ENCODE measurements at regions of chr2 and their contacts with region 1.

Region 1: DNA sequence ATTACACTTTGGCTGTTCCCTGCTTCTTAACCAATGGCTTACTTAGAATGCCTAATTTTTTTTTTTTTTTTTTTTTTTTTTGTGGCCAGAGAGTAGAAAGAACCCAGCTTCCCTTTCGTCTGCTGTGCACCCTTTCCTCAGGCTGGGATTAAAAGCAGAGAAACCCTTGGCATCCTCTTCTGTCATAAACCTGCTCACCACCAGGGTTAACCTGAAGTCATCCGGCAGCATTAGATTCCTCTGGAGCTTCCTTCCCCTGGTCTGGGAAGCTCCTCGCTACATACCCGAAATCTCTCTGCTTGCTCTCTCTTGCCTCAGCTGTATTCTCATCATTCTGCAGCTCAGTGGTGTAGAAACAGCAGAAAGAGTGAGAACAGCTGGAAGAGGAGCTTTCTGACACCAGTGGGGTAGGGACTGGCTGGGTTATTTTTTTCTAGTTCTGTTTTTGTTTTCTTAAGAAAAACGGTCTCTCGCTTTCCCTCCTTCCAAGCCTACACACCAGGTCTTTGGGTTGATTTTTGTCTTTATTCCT is 339.0 kb upstream of the MEIS1 start:
- DNase-seq: peak in 1 of 2 experiments; percentile 17
- H3K4me3 ChIP-seq: no peak overlapping the region
- H3K27ac ChIP-seq: no peak overlapping the region
- H3K4me1 ChIP-seq: no peaks in the 10 kb centered on the region; a peak in 1 of 7 replicates
- H3K27me3 ChIP-seq: no peaks in the 10 kb centered on the region; a peak in 1 of 7 replicates
- CTCF ChIP-seq: peak; percentile 30 to 69 (median 32); a peak in 3 of 4 replicates
- EP300 ChIP-seq: no peak
- POLR2A ChIP-seq: no peak
- RAD21 ChIP-seq: peak; percentile 25 to 50

Region 2: DNA sequence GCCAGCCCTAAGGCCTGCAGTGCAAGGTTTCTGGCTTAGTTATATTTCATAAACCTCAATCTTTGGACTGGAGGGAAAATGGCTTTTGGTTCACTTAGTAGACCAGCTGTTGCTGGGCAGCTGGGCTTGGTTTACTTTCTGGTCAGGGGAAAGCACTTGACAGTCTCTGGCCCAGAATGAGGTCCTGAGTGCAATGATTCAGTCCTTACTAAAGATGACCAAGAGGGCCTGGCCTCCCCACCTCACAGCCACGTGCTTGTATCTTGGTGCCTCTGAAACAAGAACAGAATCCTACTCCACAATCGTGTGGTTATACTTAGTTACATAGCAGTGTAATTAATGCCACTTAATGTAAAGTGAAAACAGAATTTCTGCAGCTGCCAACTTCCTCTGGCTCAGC is 13.5 kb after region 1 on chr2:
- CTCF ChIA-PET with region 1: interaction called, 21 read pairs
- POLR2A ChIA-PET with region 1: no interaction called
- DNase-seq: no peak
- H3K4me3 ChIP-seq: no peak overlapping the region
- H3K27ac ChIP-seq: no peak overlapping the region
- H3K4me1 ChIP-seq: peaks cover 0 to 2% (median 0%) of the 10 kb centered on the region in 4 experiments; a peak in 1 of 7 replicates
- H3K27me3 ChIP-seq: no peaks in the 10 kb centered on the region
- CTCF ChIP-seq: no peak
- EP300 ChIP-seq: no peak
- POLR2A ChIP-seq: no peak
- RAD21 ChIP-seq: no peak